Dorsolateral prefrontal cortex (tissue), 120 donors: ENCODE measurements at regions of chr2 and their contacts with region 1.

Region 1: DNA sequence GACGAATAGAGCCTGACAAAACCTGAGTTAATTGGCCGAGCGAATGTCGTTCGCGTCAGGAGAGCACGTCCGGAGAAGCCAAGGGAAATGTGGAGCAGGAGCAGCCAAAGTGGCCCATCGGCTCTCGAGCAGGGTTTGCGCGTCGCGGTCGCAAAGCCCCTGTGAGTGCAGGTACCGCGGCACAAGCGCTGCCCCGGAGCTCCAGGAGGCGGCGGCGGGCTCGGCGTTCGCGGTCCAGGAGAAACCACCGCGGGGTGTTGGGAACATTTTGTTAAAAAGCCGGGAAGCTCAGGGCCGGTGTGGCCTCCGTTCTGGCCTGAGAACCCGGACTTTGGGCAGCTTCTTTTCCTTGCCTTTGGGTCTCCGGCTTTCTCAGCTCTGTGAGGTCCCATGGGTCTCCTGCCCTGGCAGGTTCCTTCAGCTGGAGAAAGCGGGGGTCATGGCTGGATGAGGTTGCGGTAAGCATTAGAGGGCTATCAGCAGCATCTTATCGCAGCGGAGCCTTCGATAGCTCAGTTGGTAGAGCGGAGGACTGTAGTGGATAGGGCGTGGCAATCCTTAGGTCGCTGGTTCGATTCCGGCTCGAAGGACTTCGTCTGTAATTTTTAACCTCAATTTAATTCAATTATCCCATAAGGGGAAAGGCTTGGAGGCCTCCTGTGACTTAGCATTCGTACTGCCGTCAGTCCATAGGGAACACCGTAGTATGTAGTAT is 1.0 kb upstream of the AGBL5 start:
- DNase-seq: peak; percentile 88 to 97 (median 94)
- H3K4me3 ChIP-seq: peak overlapping the region; percentile 68 to 98 (median 91)
- H3K27ac ChIP-seq: peak overlapping the region; percentile 73 to 100 (median 97)
- H3K27me3 ChIP-seq: no peaks in the 10 kb centered on the region
- CTCF ChIP-seq: peak in 36 of 56 donors; percentile 6 to 57 (median 34)

Region 2: GRCh38 chr2:27032495-27033252 is 17.8 kb before region 1 on chr2 and contains the start of gene TMEM214:
- intact Hi-C with region 1: loop called in 1 of 2 experiments (anchors 2 kb)
- DNase-seq: peak; percentile 79 to 94 (median 88)
- H3K4me3 ChIP-seq: peak within 1 kb of the TSS; percentile 64 to 99 (median 92)
- H3K27ac ChIP-seq: peak within 1 kb of the TSS in 54 of 59 donors; percentile 25 to 92 (median 71)
- H3K27me3 ChIP-seq: no peaks in the 10 kb centered on the region
- CTCF ChIP-seq: peak in 24 of 56 donors; percentile 5 to 47 (median 28)
- total RNA-seq, gene TMEM214: 30.6 to 65.3 (median 43.5) TPM

Region 3: GRCh38 chr2:27096748-27097297 is 46.4 kb after region 1 on chr2:
- intact Hi-C with region 1: no loop called
- DNase-seq: no peak
- H3K4me3 ChIP-seq: peak overlapping the region in 7 of 59 donors; percentile 44 to 57 (median 52)
- H3K27ac ChIP-seq: peak overlapping the region in 39 of 59 donors; percentile 5 to 75 (median 55)
- H3K27me3 ChIP-seq: no peaks in the 10 kb centered on the region
- CTCF ChIP-seq: no peak